ENCODE measurements at regions of chr20 and their contacts with region 1.

Region 1: GRCh38 chr20:44576297-44576696 is 6.1 kb upstream of the PKIG start:
- DNase-seq: peak; percentile 65
- ATAC-seq: peak; percentile 12; the same call in 1 of the 2 replicates
- H3K4me3 ChIP-seq: no peak overlapping the region
- H3K27ac ChIP-seq: peak overlapping the region; percentile 84
- H3K4me1 ChIP-seq: peaks cover 55% of the 10 kb centered on the region
- H3K27me3 ChIP-seq: no peaks in the 10 kb centered on the region
- CTCF ChIP-seq: peak; percentile 70

Region 2: DNA sequence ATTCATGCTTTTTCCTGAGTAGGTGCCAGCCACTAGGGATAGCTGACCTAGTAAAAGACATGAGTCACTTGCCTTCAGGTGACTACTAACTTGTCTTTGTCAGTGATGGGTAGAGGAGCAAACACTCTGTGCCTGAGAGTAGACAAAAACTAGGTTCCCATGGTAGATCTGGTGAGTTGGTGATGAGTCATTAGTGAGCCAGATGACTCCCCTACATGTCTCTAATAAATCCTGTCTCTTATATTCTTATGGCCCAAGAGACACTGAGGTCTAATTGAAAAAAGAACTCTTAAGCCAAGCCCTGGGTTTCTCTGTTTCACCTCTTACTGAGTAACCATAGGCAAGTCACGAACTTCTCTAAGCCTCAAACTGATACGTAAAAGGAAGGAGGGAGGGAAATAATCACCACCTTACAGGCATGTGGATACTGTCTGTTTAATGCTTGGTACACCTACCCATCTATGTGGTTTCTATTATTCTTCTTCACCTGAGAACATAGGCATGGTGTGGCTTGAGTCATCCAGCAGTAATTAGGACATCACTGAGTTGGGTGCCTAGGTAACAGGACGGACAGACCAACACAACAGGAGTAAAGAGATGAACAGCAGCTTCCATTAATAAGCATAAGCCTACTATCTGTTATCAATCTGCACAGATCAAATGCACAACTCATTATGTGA is 80.4 kb before region 1 on chr20:
- CTCF ChIA-PET with region 1: no interaction called
- POLR2A ChIA-PET with region 1: no interaction called
- intact Hi-C with region 1: loop called (anchors 2 kb)
- DNase-seq: peak; percentile 99
- ATAC-seq: peak; percentile 82
- H3K4me3 ChIP-seq: peak overlapping the region; percentile 20; the same call in 1 of the 2 replicates
- H3K27ac ChIP-seq: peak overlapping the region; percentile 96
- H3K4me1 ChIP-seq: peaks cover 50% of the 10 kb centered on the region
- H3K27me3 ChIP-seq: no peaks in the 10 kb centered on the region
- CTCF ChIP-seq: no peak

Region 3: GRCh38 chr20:44532259-44532980 is 43.9 kb before region 1 on chr20:
- CTCF ChIA-PET with region 1: no interaction called
- POLR2A ChIA-PET with region 1: interaction called, 11 read pairs
- intact Hi-C with region 1: loop called (anchors 5 kb)
- DNase-seq: peak; percentile 25
- ATAC-seq: peak; percentile 14
- H3K4me3 ChIP-seq: peak overlapping the region; percentile 75
- H3K27ac ChIP-seq: peak overlapping the region; percentile 41
- H3K4me1 ChIP-seq: peaks cover 27% of the 10 kb centered on the region
- H3K27me3 ChIP-seq: no peaks in the 10 kb centered on the region
- CTCF ChIP-seq: no peak

Region 4: DNA sequence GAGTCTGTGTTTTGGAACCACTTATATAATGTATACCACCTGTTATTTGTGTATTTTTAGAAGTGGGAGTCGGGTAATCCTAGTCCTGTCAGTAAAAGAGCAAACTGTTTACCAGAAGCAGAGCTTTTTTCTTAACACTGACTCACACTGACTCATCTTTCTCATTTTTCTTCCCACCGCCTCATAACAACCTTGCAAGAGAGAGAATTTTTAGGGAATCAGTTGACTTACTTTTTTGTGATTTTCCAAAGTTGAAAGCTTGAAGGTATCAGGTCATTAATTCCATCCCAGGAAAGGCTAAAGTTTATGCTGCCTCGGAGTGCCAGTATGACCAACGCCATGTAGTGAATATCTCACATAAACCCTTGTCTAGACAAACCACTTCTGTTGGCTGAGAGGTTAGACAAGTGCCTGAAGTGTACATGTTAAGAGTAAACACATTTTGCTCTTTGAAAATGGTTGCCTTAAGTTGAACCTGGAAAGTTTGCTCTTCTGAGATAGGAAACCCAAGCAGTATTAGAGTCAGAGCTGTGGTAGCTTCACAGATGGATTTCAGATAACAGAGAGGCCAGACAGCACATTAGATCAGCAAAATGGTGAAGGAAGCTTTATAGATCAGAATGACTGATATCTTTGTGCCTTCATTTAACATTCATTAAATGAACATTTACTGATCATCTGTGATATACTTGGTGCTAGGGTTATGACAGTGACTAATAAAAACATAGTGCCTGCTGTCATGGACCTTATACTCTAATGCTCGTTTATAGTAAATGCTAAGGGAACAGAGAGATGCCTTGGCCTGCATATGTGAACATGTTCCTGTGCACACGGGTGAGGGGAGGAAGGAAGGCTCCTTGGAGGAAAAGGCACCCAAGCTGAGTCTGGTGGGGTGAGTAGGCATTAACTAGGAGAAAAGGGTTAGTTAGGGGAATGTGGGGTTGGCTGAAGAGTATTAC is 23.1 kb before region 1 on chr20:
- CTCF ChIA-PET with region 1: interaction called, 4 read pairs
- POLR2A ChIA-PET with region 1: no interaction called
- intact Hi-C with region 1: loop called (anchors 1 kb)
- DNase-seq: peak; percentile 83
- ATAC-seq: peak; percentile 94
- H3K4me3 ChIP-seq: peak overlapping the region; percentile 27; the same call in 1 of the 2 replicates
- H3K27ac ChIP-seq: peak overlapping the region; percentile 73
- H3K4me1 ChIP-seq: peaks cover 30% of the 10 kb centered on the region
- H3K27me3 ChIP-seq: no peaks in the 10 kb centered on the region
- CTCF ChIP-seq: no peak

Region 5: GRCh38 chr20:44683263-44684046 is 107.2 kb after region 1 on chr20:
- CTCF ChIA-PET with region 1: no interaction called
- POLR2A ChIA-PET with region 1: no interaction called
- intact Hi-C with region 1: no loop called
- DNase-seq: peak; percentile 87
- ATAC-seq: peak; percentile 85
- H3K4me3 ChIP-seq: no peak overlapping the region
- H3K27ac ChIP-seq: no peak overlapping the region
- H3K4me1 ChIP-seq: peaks cover 10% of the 10 kb centered on the region
- H3K27me3 ChIP-seq: no peaks in the 10 kb centered on the region
- CTCF ChIP-seq: peak; percentile 89